Left ventricle myocardium inferior (tissue), 1 donor: ENCODE measurements at regions of chr14 and their contacts with region 1.

Region 1: GRCh38 chr14:64421166-64421565 is 33.0 kb downstream of the MTHFD1 start:
- DNase-seq: no peak
- H3K4me3 ChIP-seq: no peak overlapping the region
- H3K27ac ChIP-seq: no peak overlapping the region
- H3K4me1 ChIP-seq: no peaks in the 10 kb centered on the region
- H3K27me3 ChIP-seq: no peaks in the 10 kb centered on the region
- CTCF ChIP-seq: no peak

Region 2: DNA sequence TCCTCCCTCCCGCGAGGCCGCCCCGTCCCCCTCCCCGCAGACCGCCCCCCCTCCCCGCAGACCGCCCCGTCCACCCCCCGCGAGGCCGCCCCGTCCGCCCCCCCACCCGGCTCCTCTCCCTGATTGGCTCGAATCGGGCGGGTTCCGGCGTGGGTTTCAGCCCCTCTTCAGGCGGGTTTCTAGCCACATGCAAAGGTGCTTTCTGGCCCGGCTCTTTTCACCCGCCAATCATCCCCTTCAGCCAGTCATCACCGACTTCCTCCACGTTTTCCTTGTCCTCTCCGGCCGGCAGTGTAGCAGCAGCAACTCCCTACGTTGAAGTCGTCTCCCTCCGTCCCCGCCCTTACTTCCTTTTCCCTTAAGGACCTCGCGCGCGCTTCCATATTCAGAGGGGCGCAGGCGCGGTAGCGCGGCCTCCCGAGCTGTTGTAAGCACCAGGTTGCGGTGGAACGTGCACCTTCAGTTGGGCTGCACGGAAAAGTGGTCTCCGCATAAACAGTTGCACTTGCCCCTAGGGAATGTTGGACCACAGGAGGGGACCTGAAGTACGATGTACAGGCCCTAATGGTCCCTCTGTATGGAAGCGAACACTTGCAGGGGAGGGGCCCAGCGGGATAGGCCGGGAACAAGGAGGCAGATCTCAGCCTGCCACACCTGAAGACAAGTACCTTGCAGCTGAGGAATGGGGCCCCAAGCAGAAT is 82.4 kb before region 1 on chr14:
- intact Hi-C with region 1: no loop called
- DNase-seq: peak; percentile 90
- H3K4me3 ChIP-seq: peak overlapping the region; percentile 81
- H3K27ac ChIP-seq: peak overlapping the region; percentile 87
- H3K4me1 ChIP-seq: peaks cover 22% of the 10 kb centered on the region
- H3K27me3 ChIP-seq: no peaks in the 10 kb centered on the region
- CTCF ChIP-seq: no peak

Region 3: DNA sequence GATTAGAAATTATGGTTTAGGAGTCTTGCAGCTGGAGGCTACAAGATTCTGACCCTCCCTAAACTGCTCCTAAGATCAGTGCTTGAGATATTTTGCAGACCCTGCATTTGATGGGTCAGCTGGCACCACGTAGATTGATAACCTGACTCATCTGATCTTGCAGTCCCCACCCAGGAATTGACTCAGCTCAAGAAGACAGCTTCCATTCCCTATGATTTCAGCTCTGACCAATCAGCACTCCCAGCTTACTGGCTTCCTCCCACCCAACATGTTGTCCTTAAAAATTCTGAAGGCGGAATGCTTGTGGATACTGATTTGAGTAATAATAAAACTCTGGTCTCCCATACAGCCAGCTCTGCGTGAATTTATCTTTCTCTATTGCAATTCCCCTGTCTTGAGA is 56.3 kb before region 1 on chr14:
- intact Hi-C with region 1: no loop called
- DNase-seq: no peak
- H3K4me3 ChIP-seq: no peak overlapping the region
- H3K27ac ChIP-seq: no peak overlapping the region
- H3K4me1 ChIP-seq: no peaks in the 10 kb centered on the region
- H3K27me3 ChIP-seq: no peaks in the 10 kb centered on the region
- CTCF ChIP-seq: no peak

Region 4: GRCh38 chr14:64478634-64479250 is 57.6 kb after region 1 on chr14:
- intact Hi-C with region 1: loop called (anchors 10 kb)
- DNase-seq: no peak
- H3K4me3 ChIP-seq: no peak overlapping the region
- H3K27ac ChIP-seq: no peak overlapping the region
- H3K4me1 ChIP-seq: no peaks in the 10 kb centered on the region
- H3K27me3 ChIP-seq: no peaks in the 10 kb centered on the region
- CTCF ChIP-seq: peak; percentile 57